PC-9 (cell line): ENCODE measurements at regions of chr2 and their contacts with region 1.

Region 1: DNA sequence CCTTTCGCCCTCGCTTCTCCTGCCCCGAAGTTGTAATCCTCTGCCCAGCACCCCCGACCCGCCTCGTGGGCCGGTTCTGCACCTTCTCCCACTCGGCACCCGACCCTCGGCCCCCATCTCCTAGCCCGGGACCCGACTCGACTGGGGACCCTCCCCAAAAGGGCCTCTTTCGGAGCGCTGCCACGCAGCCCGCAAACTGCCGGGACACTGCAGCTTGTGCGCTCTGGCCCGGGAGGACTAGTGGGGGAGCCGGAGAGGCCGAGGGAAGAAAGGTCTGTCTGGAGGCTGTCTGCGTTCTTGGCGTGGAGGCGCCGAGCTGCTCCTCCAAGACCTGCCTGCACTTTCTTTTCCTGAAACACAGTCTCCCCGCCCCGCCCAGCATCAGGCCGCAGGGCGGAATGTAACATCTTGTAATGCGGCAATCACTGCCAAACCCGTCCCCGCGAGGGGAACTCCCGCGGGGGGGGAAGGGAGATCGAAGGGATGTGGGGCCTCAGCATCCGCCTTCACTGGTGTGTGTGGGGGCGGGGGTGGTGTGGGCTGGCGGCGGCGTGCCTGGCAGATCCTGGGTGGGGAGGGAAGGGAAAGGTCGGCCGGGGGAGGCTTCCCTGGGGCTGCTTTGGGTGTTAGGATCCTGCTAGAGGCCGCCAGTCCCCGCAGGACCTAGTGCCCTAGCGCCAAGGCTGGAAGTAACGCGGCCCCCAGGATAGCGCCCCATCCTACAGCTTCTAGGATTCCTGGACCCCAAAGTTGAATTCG is 7.4 kb downstream of the DLX2 start:
- DNase-seq: peak; percentile 88 to 94
- H3K4me3 ChIP-seq: peak overlapping the region; percentile 73
- H3K27ac ChIP-seq: peak overlapping the region; percentile 12
- H3K4me1 ChIP-seq: peaks cover 45% of the 10 kb centered on the region
- H3K27me3 ChIP-seq: no peaks in the 10 kb centered on the region
- CTCF ChIP-seq: no peak

Region 2: DNA sequence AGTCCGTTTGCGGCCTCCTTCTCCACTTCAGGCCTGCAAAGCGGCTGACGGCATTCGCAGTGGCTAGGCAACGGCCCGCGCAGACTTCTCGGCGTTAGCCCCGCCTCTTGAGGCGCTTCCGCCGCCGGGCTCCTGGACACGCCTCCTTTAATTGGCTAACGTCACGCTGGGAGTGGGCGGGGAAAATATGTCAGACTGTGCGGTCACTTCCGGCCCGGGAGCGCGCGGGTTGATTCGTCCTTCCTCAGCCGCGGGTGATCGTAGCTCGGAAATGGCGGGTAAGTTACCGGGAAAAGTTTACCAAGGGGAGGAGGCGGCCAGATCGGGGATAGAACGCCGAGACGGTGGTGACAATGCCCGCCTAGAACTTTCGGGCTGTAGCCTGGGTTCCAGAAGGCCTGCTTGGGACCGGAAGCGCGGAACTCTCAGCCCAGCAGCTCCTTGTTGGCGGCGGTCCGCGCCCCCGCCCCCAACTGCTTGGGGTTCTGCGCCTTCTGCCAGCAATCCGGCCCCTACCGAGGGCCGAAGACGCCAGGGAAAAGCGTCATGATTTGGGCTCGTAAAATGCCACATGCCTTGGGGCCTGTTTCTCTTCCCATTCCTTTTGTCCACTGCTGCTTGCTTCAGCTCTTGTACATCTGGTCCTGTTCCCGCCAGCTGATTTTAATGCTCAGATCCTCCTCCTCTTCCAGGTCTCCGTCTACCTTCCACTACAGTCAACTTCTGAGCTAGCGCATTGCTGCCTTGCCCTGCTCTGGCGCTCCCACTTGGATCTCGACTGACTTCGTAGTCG is 172.9 kb before region 1 on chr2 and contains the start of gene HAT1:
- CTCF ChIA-PET with region 1: interaction called, 5 read pairs
- POLR2A ChIA-PET with region 1: interaction called, 3 read pairs
- intact Hi-C with region 1: loop called (anchors 1 kb)
- DNase-seq: peak; percentile 98 to 100
- H3K4me3 ChIP-seq: peak within 1 kb of the TSS; percentile 68
- H3K27ac ChIP-seq: peak within 1 kb of the TSS; percentile 52
- H3K4me1 ChIP-seq: peaks cover 25% of the 10 kb centered on the region
- H3K27me3 ChIP-seq: no peaks in the 10 kb centered on the region
- CTCF ChIP-seq: no peak
- total RNA-seq, gene HAT1: 96.4 and 132 TPM in 2 replicates

Region 3: GRCh38 chr2:172021955-172022354 is 73.4 kb before region 1 on chr2:
- CTCF ChIA-PET with region 1: interaction called, 11 read pairs
- POLR2A ChIA-PET with region 1: no interaction called
- intact Hi-C with region 1: loop called (anchors 2 kb)
- DNase-seq: peak in 1 of 2 experiments; percentile 34
- H3K4me3 ChIP-seq: no peak overlapping the region
- H3K27ac ChIP-seq: peak overlapping the region; percentile 32
- H3K4me1 ChIP-seq: peaks cover 24% of the 10 kb centered on the region
- H3K27me3 ChIP-seq: no peaks in the 10 kb centered on the region
- CTCF ChIP-seq: no peak